Caco-2 (cell line): ENCODE measurements at regions of chr16 and their contacts with region 1.

Region 1: GRCh38 chr16:72997109-72997608 is 50.8 kb downstream of the ZFHX3 start:
- DNase-seq: peak; percentile 93 to 96
- H3K4me3 ChIP-seq: 0 out of 2 replicates have a peak overlapping the region, but pooled peaks have one; percentile 1
- H3K4me3 Mint-ChIP-seq: peak overlapping the region; percentile 59
- H3K27ac Mint-ChIP-seq: peak overlapping the region; percentile 86
- H3K4me1 ChIP-seq: peaks cover 91% of the 10 kb centered on the region
- H3K4me1 Mint-ChIP-seq: peaks cover 80% of the 10 kb centered on the region
- H3K27me3 ChIP-seq: no peaks in the 10 kb centered on the region
- H3K27me3 Mint-ChIP-seq: no peaks in the 10 kb centered on the region
- CTCF ChIP-seq: no peak

Region 2: DNA sequence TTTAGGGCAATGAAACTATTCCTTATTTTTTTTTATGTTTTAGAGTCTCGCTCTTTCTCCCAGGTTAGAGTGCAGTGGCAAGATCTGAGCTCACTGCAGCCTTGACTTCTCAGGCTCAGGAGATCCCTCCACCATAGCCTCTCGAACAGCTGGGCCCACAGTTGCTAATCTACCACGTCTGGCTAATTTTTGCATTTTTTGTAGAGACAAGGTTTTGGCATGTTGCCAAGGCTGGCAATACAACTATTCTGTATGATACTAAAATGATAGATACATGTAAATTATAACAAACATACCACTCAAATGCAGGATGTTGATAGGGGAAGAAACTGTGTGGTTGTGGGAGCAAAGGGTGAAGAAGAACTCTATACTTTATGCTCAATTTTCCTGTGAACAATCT is 350.5 kb before region 1 on chr16:
- CTCF ChIA-PET with region 1: no interaction called
- POLR2A ChIA-PET with region 1: no interaction called
- intact Hi-C with region 1: no loop called
- DNase-seq: no peak
- H3K4me3 ChIP-seq: no peak overlapping the region
- H3K4me3 Mint-ChIP-seq: no peak overlapping the region
- H3K27ac Mint-ChIP-seq: no peak overlapping the region
- H3K4me1 ChIP-seq: no peaks in the 10 kb centered on the region
- H3K4me1 Mint-ChIP-seq: no peaks in the 10 kb centered on the region
- H3K27me3 ChIP-seq: no peaks in the 10 kb centered on the region
- H3K27me3 Mint-ChIP-seq: no peaks in the 10 kb centered on the region
- CTCF ChIP-seq: no peak

Region 3: GRCh38 chr16:72876221-72876620 is 120.9 kb before region 1 on chr16:
- CTCF ChIA-PET with region 1: no interaction called
- POLR2A ChIA-PET with region 1: interaction called, 4 read pairs
- intact Hi-C with region 1: loop called (anchors 1 kb)
- DNase-seq: no peak
- H3K4me3 ChIP-seq: no peak overlapping the region
- H3K4me3 Mint-ChIP-seq: peak overlapping the region; percentile 73
- H3K27ac Mint-ChIP-seq: peak overlapping the region; percentile 100
- H3K4me1 ChIP-seq: peaks cover 50% of the 10 kb centered on the region
- H3K4me1 Mint-ChIP-seq: peaks cover 58% of the 10 kb centered on the region
- H3K27me3 ChIP-seq: no peaks in the 10 kb centered on the region
- H3K27me3 Mint-ChIP-seq: no peaks in the 10 kb centered on the region
- CTCF ChIP-seq: no peak

Region 4: GRCh38 chr16:72938795-72939164 is 58.4 kb before region 1 on chr16:
- CTCF ChIA-PET with region 1: no interaction called
- POLR2A ChIA-PET with region 1: interaction called, 4 read pairs
- intact Hi-C with region 1: loop called (anchors 1 kb)
- DNase-seq: no peak
- H3K4me3 ChIP-seq: no peak overlapping the region
- H3K4me3 Mint-ChIP-seq: no peak overlapping the region
- H3K27ac Mint-ChIP-seq: peak overlapping the region; percentile 76
- H3K4me1 ChIP-seq: peaks cover 66% of the 10 kb centered on the region
- H3K4me1 Mint-ChIP-seq: peaks cover 58% of the 10 kb centered on the region
- H3K27me3 ChIP-seq: no peaks in the 10 kb centered on the region
- H3K27me3 Mint-ChIP-seq: no peaks in the 10 kb centered on the region
- CTCF ChIP-seq: no peak

Region 5: DNA sequence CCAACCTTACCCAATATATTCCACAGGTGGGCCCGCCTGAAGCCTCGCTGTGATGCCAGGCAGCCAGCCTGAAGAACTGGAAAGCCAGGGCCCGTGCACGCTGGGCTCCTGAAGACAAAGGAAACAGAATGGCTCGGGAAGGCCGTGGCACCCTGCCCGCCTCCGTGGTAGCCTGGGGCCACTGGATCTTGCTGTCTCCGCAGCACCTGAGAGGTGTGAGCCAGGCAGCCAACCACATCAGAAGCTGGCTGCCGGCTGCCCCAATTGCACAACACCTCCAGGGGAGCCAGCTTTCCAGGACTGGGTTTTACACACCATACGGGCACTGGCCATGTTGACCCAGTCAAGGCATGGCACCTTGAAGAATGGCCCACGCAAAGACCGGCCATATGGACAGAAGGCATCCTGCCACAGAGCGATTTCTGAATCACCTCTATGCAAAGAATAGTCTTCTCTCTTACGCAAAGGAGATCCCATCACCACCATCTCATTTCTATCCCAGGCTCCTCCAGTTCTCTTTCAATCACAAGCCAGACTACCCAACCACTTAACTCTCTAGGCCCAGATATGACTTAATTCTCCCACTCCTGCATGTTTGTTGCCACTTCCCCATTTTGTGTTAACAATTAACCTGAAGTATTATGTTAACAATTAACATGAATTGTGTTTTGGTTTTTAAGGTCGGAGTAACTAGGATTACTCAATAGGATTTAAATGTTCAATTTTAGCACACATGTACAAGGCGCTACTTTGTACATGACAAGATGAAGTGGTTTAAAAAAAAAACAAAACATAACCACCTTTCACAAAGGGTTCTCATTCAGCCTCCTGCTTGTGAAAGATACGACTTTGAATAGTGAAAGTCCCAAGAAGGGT is 18.7 kb after region 1 on chr16:
- CTCF ChIA-PET with region 1: interaction called, 4 read pairs
- POLR2A ChIA-PET with region 1: no interaction called
- intact Hi-C with region 1: loop called (anchors 1 kb)
- DNase-seq: no peak
- H3K4me3 ChIP-seq: no peak overlapping the region
- H3K4me3 Mint-ChIP-seq: peak overlapping the region; percentile 6
- H3K27ac Mint-ChIP-seq: peak overlapping the region; percentile 7
- H3K4me1 ChIP-seq: peaks cover 40% of the 10 kb centered on the region
- H3K4me1 Mint-ChIP-seq: peaks cover 34% of the 10 kb centered on the region
- H3K27me3 ChIP-seq: no peaks in the 10 kb centered on the region
- H3K27me3 Mint-ChIP-seq: no peaks in the 10 kb centered on the region
- CTCF ChIP-seq: no peak

Region 6: GRCh38 chr16:73027685-73028111 is 30.5 kb after region 1 on chr16:
- CTCF ChIA-PET with region 1: interaction called, 4 read pairs
- POLR2A ChIA-PET with region 1: no interaction called
- intact Hi-C with region 1: loop called (anchors 2 kb)
- DNase-seq: no peak
- H3K4me3 ChIP-seq: no peak overlapping the region
- H3K4me3 Mint-ChIP-seq: peak overlapping the region; percentile 17
- H3K27ac Mint-ChIP-seq: peak overlapping the region; percentile 85
- H3K4me1 ChIP-seq: peaks cover 56% of the 10 kb centered on the region
- H3K4me1 Mint-ChIP-seq: peaks cover 65% of the 10 kb centered on the region
- H3K27me3 ChIP-seq: no peaks in the 10 kb centered on the region
- H3K27me3 Mint-ChIP-seq: no peaks in the 10 kb centered on the region
- CTCF ChIP-seq: no peak